ENCODE measurements at regions of chr5 and their contacts with region 1.

Region 1: DNA sequence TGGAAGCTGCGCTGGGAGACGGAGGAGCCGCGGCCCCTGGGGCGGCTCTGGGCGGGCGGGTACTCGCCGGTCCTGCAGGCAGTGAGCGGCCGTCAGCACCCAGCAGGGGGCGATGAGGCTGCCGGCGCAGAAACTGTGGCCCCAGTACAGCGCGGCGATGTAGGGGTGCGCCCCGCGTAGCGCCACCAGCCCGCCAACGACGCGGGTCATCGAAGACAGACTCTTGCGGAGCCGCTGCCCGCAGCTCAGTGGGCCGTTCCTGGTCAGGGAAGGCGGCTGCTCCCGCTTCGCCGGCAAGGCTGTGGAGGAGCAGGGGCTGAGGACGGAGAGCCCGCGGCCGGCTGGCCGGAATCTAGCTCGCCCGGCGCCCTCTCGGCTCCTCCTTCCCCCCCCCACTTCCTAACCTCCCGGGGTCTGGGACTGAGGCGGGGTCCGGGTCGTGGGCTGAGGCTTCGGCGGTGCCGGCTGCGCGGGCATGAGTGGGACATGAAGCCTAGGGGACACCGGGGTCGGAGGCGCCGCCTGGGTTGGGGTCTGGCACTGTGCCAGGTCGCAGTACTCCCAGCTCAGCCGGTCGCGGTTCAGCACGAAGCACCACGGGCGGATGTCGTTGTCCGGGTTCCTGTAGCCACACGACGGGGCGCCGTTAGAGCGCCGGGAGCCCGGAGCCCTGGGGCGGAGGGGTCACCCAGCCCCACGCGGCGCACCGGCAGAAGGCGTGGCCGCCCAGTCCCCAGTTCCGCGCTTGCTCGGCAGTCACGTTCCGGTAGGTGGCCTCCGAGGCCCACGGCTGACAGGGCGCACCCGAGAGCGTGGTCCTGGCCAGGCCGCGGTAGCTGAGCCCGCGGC is 3.6 kb upstream of the PFN3 start:
- DNase-seq: peak; percentile 90
- ATAC-seq: peak; percentile 89
- H3K4me3 Mint-ChIP-seq: peak overlapping the region; percentile 64
- H3K27ac Mint-ChIP-seq: peak overlapping the region; percentile 63
- H3K4me1 Mint-ChIP-seq: peaks cover 37% of the 10 kb centered on the region
- H3K27me3 Mint-ChIP-seq: peaks cover 23% of the 10 kb centered on the region

Region 2: DNA sequence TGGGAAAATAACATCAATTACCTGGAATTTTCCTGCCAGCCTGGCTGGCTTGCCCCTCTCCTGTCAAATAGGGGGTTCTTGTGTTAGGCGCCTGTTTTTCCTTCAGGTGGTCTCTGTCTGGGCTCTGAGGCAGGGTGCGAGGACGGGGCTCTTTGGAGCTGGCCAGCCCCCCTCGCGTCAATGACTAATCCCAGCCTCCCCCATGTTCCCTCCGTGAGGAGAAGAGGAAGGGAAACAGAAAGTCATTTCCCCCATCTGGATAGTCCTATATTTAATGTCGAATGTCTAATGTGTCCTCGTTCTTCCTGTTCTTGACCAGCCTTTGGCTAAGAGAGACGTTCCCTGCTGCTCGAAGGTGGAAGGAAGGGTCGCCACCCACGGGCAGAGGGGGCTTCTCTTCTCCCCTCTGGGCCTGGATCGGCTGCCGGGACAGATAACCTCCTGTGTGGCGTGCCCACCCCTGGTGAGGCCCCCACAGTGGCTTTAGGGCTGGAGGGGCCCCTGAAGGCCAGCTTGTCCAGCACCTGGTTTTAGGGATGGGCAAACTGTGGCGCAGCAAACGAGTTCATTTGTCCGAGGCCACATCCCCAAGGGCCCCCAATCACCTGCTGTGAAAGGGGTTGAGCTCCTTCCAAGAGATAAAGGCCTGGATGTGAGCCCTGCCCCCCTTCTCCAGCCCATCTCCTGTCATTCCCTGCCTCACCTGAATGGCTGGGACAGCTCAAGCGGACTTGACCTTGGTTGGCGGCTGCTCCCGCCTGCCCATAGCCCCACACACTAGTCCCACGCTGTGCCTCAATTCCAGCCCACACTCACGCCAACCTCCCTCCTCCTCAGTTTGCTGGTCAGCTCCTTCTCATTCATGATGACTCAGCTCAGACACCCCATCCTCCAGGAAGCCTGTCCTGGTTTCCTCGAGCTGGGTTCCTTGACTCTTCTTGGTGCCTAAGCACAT is 629.5 kb before region 1 on chr5:
- CTCF ChIA-PET with region 1: no interaction called
- DNase-seq: peak; percentile 38
- ATAC-seq: no peak
- H3K4me3 Mint-ChIP-seq: no peak overlapping the region
- H3K27ac Mint-ChIP-seq: no peak overlapping the region
- H3K4me1 Mint-ChIP-seq: no peaks in the 10 kb centered on the region
- H3K27me3 Mint-ChIP-seq: peaks cover 27% of the 10 kb centered on the region

Region 3: DNA sequence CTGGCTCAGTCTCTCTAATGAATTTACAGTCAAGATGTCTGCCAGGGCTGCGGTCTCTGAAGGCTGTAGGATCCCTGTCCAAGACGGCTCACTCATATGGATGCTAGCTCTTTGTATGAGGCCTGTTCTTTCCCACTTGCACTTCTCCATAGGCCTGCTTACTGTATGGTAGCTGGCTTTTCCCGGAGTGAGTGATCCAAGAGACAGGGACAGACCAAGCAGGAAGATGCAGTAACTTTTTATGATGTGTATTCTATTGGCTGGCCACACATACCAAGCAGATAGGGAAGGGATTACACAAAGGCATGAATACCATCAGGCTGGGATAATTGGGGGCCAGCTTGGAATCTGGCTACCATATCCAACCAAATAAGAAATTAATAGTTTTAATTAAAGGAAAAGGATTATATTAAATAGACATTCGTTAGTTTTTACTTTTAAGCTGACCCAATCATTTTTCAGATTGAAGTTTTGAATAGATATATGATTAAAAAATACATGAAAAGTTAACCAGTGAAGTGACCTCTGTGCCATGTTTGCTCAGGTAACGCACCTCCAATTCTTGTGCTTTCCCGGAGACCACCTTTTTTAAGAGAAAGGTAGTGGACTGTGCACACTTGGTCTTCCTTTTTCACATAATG is 249.9 kb before region 1 on chr5:
- CTCF ChIA-PET with region 1: no interaction called
- DNase-seq: no peak
- ATAC-seq: no peak
- H3K4me3 Mint-ChIP-seq: no peak overlapping the region
- H3K27ac Mint-ChIP-seq: no peak overlapping the region
- H3K4me1 Mint-ChIP-seq: peaks cover 6% of the 10 kb centered on the region
- H3K27me3 Mint-ChIP-seq: no peaks in the 10 kb centered on the region

Region 4: GRCh38 chr5:177311723-177312648 is 92.0 kb before region 1 on chr5 and contains the start of gene MXD3:
- CTCF ChIA-PET with region 1: interaction called, 60 read pairs
- DNase-seq: peak; percentile 99
- ATAC-seq: peak; percentile 88
- H3K4me3 Mint-ChIP-seq: peak within 1 kb of the TSS; percentile 97
- H3K27ac Mint-ChIP-seq: peak within 1 kb of the TSS; percentile 95
- H3K4me1 Mint-ChIP-seq: peaks cover 52% of the 10 kb centered on the region
- H3K27me3 Mint-ChIP-seq: no peaks in the 10 kb centered on the region
- total RNA-seq, gene MXD3: 60.2 to 117 TPM

Region 5: GRCh38 chr5:177362610-177363507 is 41.2 kb before region 1 on chr5:
- CTCF ChIA-PET with region 1: interaction called, 64 read pairs
- DNase-seq: peak; percentile 68
- ATAC-seq: peak; percentile 75
- H3K4me3 Mint-ChIP-seq: peak overlapping the region; percentile 74
- H3K27ac Mint-ChIP-seq: peak overlapping the region; percentile 64
- H3K4me1 Mint-ChIP-seq: peaks cover 71% of the 10 kb centered on the region
- H3K27me3 Mint-ChIP-seq: no peaks in the 10 kb centered on the region

Region 6: GRCh38 chr5:177390363-177391300 is 13.4 kb before region 1 on chr5:
- CTCF ChIA-PET with region 1: interaction called, 254 read pairs
- DNase-seq: peak; percentile 93
- ATAC-seq: peak; percentile 72
- H3K4me3 Mint-ChIP-seq: peak overlapping the region; percentile 37
- H3K27ac Mint-ChIP-seq: peak overlapping the region; percentile 88
- H3K4me1 Mint-ChIP-seq: peaks cover 47% of the 10 kb centered on the region
- H3K27me3 Mint-ChIP-seq: no peaks in the 10 kb centered on the region

Region 7: GRCh38 chr5:177462021-177462670 is 58.1 kb after region 1 on chr5:
- CTCF ChIA-PET with region 1: interaction called, 717 read pairs
- DNase-seq: peak; percentile 59
- ATAC-seq: peak; percentile 17
- H3K4me3 Mint-ChIP-seq: no peak overlapping the region
- H3K27ac Mint-ChIP-seq: peak overlapping the region; percentile 84
- H3K4me1 Mint-ChIP-seq: peaks cover 32% of the 10 kb centered on the region
- H3K27me3 Mint-ChIP-seq: no peaks in the 10 kb centered on the region

Region 8: DNA sequence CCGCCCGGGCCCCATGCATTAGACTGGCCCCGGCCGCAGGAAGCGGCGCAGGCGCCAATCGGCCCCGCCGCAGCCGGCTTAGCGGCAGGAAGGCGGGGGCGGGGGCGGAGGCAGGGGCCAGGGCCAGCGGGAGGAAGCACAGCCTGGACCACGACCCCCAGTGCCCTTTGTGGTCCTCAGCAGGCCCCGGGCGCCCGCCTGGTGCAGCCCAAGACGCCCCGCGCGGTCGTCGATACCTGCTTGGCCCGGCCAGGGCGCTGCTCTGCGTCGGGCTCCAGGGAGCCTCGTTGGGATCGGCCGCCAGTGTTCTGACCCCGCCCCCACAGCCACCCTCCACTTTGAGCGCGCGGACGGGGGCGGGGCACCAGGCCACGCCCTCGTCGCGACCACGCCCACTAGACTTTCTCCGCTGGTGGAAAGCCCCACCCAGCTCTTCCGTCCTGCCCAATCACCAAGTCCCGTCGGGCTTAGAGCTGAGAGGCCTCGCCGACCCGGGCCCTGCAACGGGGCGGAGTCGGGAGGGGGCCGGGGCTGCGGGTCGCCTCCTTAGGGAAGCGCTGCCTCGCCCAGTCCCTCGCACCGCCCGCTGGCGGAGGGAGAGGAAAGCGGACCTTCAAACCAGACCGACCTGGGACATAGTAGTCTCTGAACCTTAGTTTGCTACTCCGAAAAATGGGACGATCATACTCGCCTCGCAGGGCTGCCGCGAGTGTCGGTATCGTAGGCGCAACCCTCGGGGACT is 93.4 kb after region 1 on chr5 and contains the start of gene PDLIM7:
- CTCF ChIA-PET with region 1: interaction called, 82 read pairs
- DNase-seq: peak; percentile 96
- ATAC-seq: peak; percentile 90
- H3K4me3 Mint-ChIP-seq: peak within 1 kb of the TSS; percentile 82
- H3K27ac Mint-ChIP-seq: peak within 1 kb of the TSS; percentile 72
- H3K4me1 Mint-ChIP-seq: peaks cover 44% of the 10 kb centered on the region
- H3K27me3 Mint-ChIP-seq: peaks cover 21% of the 10 kb centered on the region
- total RNA-seq, gene PDLIM7: 72.9 to 81.2 TPM